Right cardiac atrium (tissue), 5 donors: ENCODE measurements at regions of chr11 and their contacts with region 1.

Region 1: GRCh38 chr11:122781378-122782195 is 56.7 kb upstream of the CRTAM start:
- DNase-seq: peak; percentile 89 to 96 (median 94)
- ATAC-seq: peak; percentile 93 to 96
- H3K4me3 ChIP-seq: no peak overlapping the region
- H3K27ac ChIP-seq: no peak overlapping the region
- H3K4me1 ChIP-seq: no peaks in the 10 kb centered on the region
- H3K27me3 ChIP-seq: no peaks in the 10 kb centered on the region

Region 2: DNA sequence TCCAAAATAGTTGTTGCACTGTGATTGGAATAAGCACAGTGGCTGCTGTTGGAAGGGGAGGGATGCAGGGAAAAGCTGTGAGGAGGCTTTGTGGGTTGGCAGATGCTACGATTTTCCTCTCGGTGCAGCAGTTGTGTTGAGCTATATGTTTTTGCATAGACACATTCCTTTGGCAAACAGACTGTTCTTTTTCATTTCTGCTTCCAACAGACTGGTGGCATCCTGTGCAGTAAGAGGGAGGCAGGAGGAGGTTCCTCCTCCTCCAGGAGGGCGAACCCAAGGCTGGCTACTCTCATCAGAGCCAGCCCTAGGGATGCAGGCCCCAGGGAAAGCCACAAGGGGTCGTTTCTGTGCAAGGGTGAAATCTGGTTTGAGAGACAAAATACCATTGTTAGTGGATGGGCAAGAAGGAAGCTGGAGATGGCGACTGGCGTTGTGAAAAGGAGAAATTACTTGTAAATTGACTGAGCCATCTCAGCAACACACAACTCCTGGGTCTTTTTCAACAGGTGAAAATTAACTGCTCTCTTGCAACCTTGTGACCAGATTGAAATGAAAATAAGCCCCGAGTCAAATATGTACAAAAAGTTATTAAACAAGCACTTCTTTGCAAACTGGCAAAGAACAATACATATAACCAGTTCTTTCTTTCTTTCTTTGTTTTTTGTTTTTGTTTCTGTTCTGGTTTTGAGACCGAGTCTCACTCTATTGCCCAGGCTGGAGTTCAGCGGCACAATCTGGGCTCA is 152.6 kb before region 1 on chr11:
- intact Hi-C with region 1: loop called (anchors 2 to 10 kb)
- DNase-seq: peak; percentile 56 to 82 (median 77)
- ATAC-seq: peak; percentile 75 to 80
- H3K4me3 ChIP-seq: no peak overlapping the region
- H3K27ac ChIP-seq: no peak overlapping the region
- H3K4me1 ChIP-seq: no peaks in the 10 kb centered on the region
- H3K27me3 ChIP-seq: no peaks in the 10 kb centered on the region

Region 3: DNA sequence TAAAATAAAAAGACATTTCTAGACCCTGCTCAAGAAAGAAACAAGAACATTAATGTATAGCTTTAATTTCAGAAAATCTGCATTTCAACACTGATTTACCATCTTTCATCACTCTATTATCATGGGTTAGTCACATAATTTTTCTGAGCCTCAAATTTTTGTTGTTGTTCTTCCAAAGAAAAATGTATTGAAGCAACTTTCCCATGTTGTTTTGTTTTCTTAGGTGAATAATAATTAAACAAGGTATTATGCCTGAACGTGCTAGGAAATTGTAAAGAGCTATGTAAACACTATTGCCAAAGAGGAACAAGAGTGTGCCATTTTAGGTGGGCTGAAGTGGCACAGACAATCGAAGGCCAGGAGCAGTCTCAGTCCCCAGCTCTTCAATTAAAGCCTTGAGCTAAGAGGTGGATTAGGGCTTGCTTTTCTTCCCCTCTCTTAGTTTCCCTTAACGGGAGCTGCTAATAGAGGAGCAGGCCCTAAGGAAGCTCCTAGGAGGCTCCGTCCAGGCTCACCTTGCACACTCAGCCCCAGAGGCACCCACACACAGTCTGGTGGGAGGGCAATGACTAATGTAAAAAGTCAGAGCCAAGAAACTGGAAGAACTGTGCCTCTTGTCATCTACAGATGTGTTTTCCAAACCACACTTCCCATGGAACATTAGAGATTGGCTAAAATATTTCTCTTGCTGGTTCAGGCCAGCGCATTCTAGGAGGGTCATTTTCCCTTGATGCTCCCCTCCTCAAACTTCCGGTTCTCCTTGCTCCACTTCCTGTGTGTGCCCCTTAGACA is 134.8 kb before region 1 on chr11:
- intact Hi-C with region 1: loop called in 1 of 4 experiments (anchors 5 kb)
- DNase-seq: no peak
- ATAC-seq: no peak
- H3K4me3 ChIP-seq: no peak overlapping the region
- H3K27ac ChIP-seq: no peak overlapping the region
- H3K4me1 ChIP-seq: no peaks in the 10 kb centered on the region
- H3K27me3 ChIP-seq: no peaks in the 10 kb centered on the region